Endothelial cell of umbilical vein (primary cell): ENCODE measurements at regions of chr4 and their contacts with region 1.

Region 1: DNA sequence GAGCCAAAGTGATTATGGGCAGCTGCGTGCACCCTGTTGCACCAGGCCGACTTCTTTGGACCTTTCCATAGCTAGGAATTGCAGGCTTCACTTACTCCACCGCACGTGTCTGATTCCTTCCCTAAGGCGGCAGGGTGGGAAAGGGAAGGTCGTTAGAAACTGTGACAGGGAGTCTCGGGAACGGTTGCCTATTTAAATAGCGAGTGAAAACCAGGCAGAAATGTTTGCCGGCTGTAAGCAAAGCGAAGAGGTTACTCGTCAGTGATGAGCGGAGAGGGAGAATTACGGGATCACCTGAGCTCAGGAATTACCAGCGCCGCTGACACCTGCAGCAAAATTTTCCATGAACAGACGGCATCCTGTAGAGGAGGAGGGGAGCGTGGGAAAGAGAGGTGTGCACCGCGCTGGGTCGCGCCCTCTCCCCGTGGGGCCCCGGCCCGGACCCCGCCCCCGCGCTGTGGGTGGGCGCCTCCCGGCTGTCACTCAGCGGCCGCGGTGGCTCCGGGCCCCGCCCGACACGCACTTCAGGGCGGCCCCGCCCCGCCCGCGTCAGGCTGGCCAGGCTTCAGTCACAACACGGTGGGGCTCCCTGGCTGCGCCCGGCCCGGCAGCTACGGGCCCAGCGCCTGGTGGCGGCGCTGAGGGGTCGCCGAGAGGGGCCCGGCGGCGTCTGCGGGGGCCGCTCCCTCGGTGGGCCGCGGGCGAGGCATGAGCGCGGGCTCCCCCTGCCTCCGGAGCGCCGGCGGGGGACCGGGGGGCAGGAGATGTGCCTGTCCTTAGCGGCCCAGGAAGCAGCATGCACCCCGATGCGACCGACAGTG is at the start of gene SNX25:
- DNase-seq: peak; percentile 82
- H3K4me3 ChIP-seq: peak within 1 kb of the TSS; percentile 67 to 90 (median 88)
- H3K27ac ChIP-seq: peak within 1 kb of the TSS; percentile 51
- H3K4me1 ChIP-seq: peaks cover 31% of the 10 kb centered on the region
- H3K27me3 ChIP-seq: no peaks in the 10 kb centered on the region
- CTCF ChIP-seq: no peak
- POLR2A ChIP-seq: peak; percentile 56
- total RNA-seq, gene SNX25: 16.1 and 20.2 TPM in 2 replicates

Region 2: GRCh38 chr4:185039508-185040273 is 169.6 kb before region 1 on chr4:
- CTCF ChIA-PET with region 1: no interaction called
- POLR2A ChIA-PET with region 1: no interaction called
- dilution Hi-C with region 1: no loop called
- intact Hi-C with region 1: no loop called
- DNase-seq: peak; percentile 68
- H3K4me3 ChIP-seq: no peak overlapping the region
- H3K27ac ChIP-seq: no peak overlapping the region
- H3K4me1 ChIP-seq: no peaks in the 10 kb centered on the region
- H3K27me3 ChIP-seq: peaks cover 0 to 3% of the 10 kb centered on the region in 2 experiments
- CTCF ChIP-seq: peak; percentile 73 to 76
- POLR2A ChIP-seq: no peak

Region 3: DNA sequence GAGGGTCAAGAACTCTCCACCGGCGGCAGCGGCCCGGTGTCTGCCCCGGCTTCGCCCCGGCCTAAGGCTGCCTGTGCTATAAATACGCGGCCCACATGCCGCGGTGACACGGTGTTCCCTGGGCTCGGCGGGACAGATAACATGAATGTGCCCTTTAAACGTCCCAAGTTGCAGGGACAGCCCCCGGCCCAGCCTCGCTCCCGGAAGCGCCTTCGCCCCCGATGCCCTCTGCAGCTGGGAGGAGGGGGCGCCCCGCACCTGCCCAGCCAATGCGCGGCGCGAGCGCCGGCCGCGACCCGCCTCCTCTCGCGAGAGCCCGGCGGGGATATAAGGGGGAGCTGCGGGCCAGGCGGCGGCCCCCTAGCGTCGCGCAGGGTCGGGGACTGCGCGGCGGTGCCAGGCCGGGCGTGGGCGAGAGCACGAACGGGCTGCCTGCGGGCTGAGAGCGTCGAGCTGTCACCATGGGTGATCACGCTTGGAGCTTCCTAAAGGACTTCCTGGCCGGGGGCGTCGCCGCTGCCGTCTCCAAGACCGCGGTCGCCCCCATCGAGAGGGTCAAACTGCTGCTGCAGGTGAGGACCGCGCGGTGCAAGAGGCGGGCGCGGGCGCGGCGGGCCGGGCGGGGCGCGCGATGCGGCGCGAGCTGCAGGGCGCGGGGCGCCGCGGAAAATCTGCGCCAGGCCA is 66.2 kb before region 1 on chr4 and contains the start of gene SLC25A4:
- CTCF ChIA-PET with region 1: no interaction called
- POLR2A ChIA-PET with region 1: no interaction called
- dilution Hi-C with region 1: no loop called
- intact Hi-C with region 1: loop called (anchors 2 kb)
- DNase-seq: peak; percentile 77
- H3K4me3 ChIP-seq: peak within 1 kb of the TSS; percentile 52 to 75 (median 69)
- H3K27ac ChIP-seq: no peak within 1 kb of the TSS
- H3K4me1 ChIP-seq: peaks cover 12% of the 10 kb centered on the region
- H3K27me3 ChIP-seq: no peaks in the 10 kb centered on the region
- CTCF ChIP-seq: peak; percentile 43 to 62
- POLR2A ChIP-seq: peak; percentile 93
- total RNA-seq, gene SLC25A4: 13.7 and 13.9 TPM in 2 replicates

Region 4: GRCh38 chr4:185244763-185245162 is 35.5 kb after region 1 on chr4:
- CTCF ChIA-PET with region 1: interaction called, 3 read pairs
- POLR2A ChIA-PET with region 1: no interaction called
- dilution Hi-C with region 1: no loop called
- intact Hi-C with region 1: loop called (anchors 5 kb)
- DNase-seq: no peak
- H3K4me3 ChIP-seq: no peak overlapping the region
- H3K27ac ChIP-seq: no peak overlapping the region
- H3K4me1 ChIP-seq: no peaks in the 10 kb centered on the region
- H3K27me3 ChIP-seq: no peaks in the 10 kb centered on the region
- CTCF ChIP-seq: no peak
- POLR2A ChIP-seq: no peak

Region 5: DNA sequence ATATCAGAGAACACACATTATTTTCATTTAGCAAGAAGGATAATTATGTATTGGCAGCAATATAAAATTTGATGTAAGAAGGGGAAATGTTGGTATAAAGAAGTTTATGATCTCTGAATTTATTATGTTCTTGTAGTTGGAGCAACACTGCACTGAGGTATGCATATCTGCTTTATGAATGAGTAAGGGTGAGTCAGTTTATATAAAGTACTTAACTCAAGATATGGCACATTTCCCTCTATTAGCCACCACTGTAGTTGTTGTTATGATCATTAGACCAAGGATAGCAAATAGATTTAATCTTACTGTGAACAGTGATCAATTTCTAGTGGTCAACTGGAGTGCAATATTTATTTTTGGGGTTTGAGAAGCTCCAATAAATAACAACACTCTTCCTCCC is 66.8 kb after region 1 on chr4:
- CTCF ChIA-PET with region 1: no interaction called
- POLR2A ChIA-PET with region 1: no interaction called
- dilution Hi-C with region 1: no loop called
- intact Hi-C with region 1: loop called (anchors 5 kb)
- DNase-seq: peak; percentile 39
- H3K4me3 ChIP-seq: no peak overlapping the region
- H3K27ac ChIP-seq: no peak overlapping the region
- H3K4me1 ChIP-seq: peaks cover 9% of the 10 kb centered on the region
- H3K27me3 ChIP-seq: no peaks in the 10 kb centered on the region
- CTCF ChIP-seq: no peak
- POLR2A ChIP-seq: no peak

Region 6: GRCh38 chr4:185358514-185358913 is 149.3 kb after region 1 on chr4:
- CTCF ChIA-PET with region 1: interaction called, 3 read pairs
- POLR2A ChIA-PET with region 1: no interaction called
- dilution Hi-C with region 1: no loop called
- intact Hi-C with region 1: loop called (anchors 1 kb)
- DNase-seq: peak; percentile 92
- H3K4me3 ChIP-seq: no peak overlapping the region
- H3K27ac ChIP-seq: peak overlapping the region; percentile 100
- H3K4me1 ChIP-seq: peaks cover 31% of the 10 kb centered on the region
- H3K27me3 ChIP-seq: no peaks in the 10 kb centered on the region
- CTCF ChIP-seq: no peak
- POLR2A ChIP-seq: no peak

Region 7: DNA sequence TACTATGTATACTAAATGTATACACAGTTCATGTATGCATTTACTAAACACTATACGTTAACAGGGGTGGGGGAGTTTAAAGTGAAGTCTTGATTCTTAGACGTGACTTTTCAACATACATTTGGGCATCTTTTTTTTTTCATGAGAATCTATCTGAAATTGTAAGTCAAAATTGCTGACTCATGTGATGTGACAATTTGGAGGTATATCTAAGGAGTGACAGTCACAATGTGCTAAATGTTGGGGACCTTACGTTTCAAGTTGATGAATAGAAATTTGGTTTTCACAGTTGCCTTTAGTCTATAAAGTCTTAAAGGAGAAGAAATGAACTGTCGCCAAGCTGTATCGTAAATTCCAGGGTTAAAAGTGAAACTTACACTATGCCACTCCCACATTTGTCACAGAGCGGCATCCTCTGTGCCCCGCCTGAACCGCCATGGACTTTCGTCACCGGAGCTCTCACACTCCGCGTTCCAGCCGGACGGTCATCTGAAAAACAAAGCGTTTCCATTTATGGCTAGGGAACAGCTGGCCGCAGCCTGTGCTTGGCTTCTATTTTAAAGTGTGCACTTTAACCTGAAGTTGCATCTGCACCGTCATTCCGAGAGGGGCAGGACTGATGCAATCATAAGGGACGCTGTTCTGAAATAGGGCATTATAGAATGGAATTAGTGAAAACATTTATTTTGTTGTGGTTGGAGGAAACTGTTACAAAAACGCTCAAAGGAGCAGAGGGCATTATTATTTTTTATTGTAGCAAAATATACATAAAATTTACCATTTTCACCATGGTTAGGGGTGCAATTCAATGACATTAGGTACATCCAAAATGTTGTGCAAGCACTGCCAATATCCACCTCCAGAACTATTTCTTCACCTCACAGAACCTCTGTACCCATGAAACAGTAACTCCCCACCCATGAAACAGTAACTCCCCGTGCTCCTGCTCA is 295.1 kb after region 1 on chr4:
- CTCF ChIA-PET with region 1: no interaction called
- POLR2A ChIA-PET with region 1: no interaction called
- dilution Hi-C with region 1: no loop called
- intact Hi-C with region 1: no loop called
- DNase-seq: no peak
- H3K4me3 ChIP-seq: no peak overlapping the region
- H3K27ac ChIP-seq: no peak overlapping the region
- H3K4me1 ChIP-seq: no peaks in the 10 kb centered on the region
- H3K27me3 ChIP-seq: no peaks in the 10 kb centered on the region
- CTCF ChIP-seq: no peak
- POLR2A ChIP-seq: no peak

Region 8: DNA sequence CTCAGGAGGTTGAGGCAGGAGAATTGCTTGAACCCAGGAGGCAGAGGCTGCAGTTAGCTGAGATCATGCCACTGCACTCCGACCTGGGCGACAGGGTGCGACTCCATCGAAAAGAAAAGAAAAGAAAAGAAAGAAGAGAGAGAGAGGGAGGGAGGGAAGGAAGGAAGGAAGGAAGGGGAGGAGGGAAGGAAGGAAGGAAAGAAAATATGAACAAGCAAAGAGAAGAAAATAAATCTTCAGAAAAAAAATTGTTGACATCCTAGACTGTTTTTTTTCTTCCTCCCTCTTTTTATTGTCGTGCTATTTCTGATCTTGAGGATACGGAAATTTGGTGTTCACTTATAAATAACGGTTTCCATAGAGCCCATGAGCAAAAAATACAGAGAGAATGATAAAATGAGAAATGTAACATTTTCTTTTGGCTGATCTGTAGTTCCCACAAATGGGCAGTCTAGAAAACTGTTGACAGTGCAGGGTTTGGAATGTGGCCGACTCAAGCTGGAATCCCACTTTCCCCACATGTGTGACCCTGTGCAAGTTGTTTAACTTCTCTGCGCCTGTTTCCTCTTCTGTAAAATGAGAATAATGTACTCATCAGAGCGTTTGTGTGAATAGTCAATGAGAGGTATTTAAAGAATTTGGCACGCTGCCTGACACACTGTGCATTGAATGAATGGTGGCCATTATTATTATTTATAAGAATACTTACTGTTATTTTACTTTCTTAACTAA is 583.3 kb after region 1 on chr4:
- CTCF ChIA-PET with region 1: no interaction called
- POLR2A ChIA-PET with region 1: no interaction called
- dilution Hi-C with region 1: no loop called
- intact Hi-C with region 1: no loop called
- DNase-seq: peak; percentile 99
- H3K4me3 ChIP-seq: peak overlapping the region in 1 of 3 experiments; percentile 34
- H3K27ac ChIP-seq: peak overlapping the region; percentile 85
- H3K4me1 ChIP-seq: peaks cover 22% of the 10 kb centered on the region
- H3K27me3 ChIP-seq: no peaks in the 10 kb centered on the region
- CTCF ChIP-seq: no peak
- POLR2A ChIP-seq: peak; percentile 46

Region 9: DNA sequence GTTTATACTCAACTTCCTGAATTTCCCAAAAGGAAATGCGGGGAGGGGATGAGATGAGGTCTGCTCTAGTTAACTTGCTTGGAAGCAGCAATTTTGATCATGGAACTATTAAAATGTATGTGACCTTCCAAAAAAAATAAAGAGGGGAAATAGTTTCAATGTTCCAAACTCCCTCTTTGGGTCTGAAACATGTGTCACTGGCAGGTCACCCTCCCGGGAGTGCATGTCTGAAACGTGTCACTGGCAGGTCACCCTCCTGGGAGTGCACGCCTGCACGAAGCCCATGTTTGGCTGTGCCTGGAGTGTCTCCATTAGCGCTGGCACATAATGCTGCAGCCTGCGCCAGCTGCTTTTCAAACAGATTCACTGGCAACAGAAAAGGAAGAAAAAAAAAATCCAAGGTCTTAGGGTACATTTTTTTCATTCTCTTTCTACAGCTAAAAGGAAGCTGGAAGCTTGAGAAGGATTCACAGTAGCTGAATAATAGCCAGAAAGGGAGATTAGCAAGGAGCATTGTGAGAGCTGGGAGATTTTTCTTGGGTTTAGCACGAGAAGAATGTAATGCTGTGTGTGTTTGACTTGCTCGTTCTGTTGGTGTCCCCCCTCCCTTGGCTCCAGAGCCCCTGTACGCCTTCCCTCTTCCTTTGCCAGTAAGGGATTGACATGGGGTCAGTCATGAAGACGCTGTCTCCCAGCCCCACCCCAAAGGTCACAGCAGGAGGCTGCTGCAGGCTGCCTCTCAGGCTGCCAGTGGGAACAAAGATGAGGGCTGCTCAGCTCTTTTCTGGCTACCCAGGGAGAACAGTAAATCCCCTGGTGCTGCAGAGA is 820.5 kb after region 1 on chr4:
- CTCF ChIA-PET with region 1: no interaction called
- POLR2A ChIA-PET with region 1: no interaction called
- dilution Hi-C with region 1: no loop called
- intact Hi-C with region 1: loop called (anchors 5 kb)
- DNase-seq: peak; percentile 85
- H3K4me3 ChIP-seq: peak overlapping the region in 1 of 3 experiments; percentile 1
- H3K27ac ChIP-seq: peak overlapping the region; percentile 42
- H3K4me1 ChIP-seq: peaks cover 21% of the 10 kb centered on the region
- H3K27me3 ChIP-seq: no peaks in the 10 kb centered on the region
- CTCF ChIP-seq: no peak
- POLR2A ChIP-seq: no peak